ENCODE measurements at regions of chr6 and their contacts with region 1.

Region 1: DNA sequence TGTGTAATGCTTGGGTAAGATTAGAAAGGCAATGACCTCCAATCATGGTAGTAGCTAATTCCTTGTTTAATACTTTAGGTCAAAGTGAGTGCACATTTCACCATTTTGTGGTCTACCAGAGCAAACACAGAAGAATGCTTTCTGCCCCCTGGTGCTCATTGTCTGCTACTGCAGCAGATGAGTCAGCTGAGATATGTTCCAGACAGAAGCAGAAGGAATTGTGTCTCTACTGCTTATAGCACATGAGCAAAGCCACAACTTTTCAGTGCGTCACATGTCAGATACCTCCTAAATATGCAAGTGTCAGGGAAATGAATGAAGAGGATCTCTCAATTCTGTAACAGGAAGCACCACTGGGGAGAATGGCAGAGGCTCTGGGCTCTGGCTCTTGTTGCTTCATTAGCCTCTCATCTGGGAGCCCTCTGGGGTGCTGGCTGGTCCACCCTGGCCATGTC is 308.9 kb downstream of the ALDH8A1 start:
- DNase-seq: peak; percentile 80
- H3K4me3 ChIP-seq: no peak overlapping the region
- H3K27ac ChIP-seq: no peak overlapping the region
- H3K27me3 ChIP-seq: no peaks in the 10 kb centered on the region
- CTCF ChIP-seq: peak; percentile 92

Region 2: GRCh38 chr6:134178230-134179044 is 462.6 kb before region 1 on chr6:
- CTCF ChIA-PET with region 1: interaction called, 13 read pairs
- POLR2A ChIA-PET with region 1: interaction called, 9 read pairs
- DNase-seq: peak; percentile 86
- H3K4me3 ChIP-seq: peak overlapping the region; percentile 55
- H3K27ac ChIP-seq: peak overlapping the region; percentile 79
- H3K27me3 ChIP-seq: no peaks in the 10 kb centered on the region
- CTCF ChIP-seq: peak; percentile 97

Region 3: DNA sequence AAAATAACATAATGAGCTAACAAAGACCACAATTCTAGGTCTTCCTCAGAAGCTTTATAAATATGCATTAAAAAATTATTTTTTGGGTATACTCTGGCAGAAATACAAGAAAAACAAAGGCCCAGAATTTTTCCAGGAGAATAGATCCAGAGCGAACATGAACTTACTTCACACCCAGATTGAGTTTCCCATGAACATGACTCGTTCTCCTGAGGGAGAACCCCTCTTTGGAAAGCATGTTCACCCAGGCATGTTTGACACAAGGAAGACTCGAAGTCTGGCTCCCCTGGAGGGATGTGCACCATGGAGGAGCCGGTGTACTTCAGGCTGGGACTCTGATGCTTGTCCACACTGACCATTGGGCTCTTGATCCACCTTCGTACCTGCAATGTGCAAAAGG is 379.2 kb before region 1 on chr6:
- CTCF ChIA-PET with region 1: no interaction called
- POLR2A ChIA-PET with region 1: no interaction called
- DNase-seq: no peak
- H3K4me3 ChIP-seq: no peak overlapping the region
- H3K27ac ChIP-seq: no peak overlapping the region
- H3K27me3 ChIP-seq: no peaks in the 10 kb centered on the region
- CTCF ChIP-seq: no peak

Region 4: DNA sequence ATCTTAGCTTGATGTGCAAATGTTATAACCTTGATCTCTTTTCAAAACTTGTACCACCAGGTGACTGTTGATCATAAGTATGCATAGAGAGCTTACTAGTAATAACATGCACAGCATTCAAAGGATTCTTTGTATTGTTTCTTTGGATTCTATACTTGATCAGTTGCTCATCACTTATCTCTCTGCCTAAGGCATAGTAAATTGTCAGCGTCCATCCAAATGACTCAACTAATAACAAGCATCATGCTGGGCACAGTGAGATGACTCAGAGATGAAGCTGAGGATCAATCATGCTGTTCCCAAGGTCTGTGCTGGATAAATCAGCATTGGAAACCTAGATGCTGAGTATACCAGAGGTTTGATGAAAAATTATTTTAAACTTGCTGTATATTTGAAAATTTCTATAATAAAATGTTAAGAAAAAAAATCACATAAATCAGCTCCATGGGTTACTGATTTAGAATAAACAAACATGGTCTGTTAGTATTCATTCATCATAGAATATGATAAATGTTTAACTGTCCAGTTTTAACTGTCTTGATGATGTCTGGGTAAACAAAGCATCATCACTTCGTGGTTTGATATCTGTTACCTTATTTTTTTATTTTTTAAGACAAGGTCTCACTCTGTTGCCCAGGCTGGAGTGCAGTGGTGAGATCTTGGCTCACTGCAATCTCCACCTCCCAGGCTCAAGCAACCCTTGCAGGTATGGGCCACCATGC is 277.5 kb before region 1 on chr6:
- CTCF ChIA-PET with region 1: no interaction called
- POLR2A ChIA-PET with region 1: no interaction called
- DNase-seq: no peak
- H3K4me3 ChIP-seq: no peak overlapping the region
- H3K27ac ChIP-seq: no peak overlapping the region
- H3K27me3 ChIP-seq: no peaks in the 10 kb centered on the region
- CTCF ChIP-seq: no peak

Region 5: GRCh38 chr6:134429861-134430380 is 211.1 kb before region 1 on chr6:
- CTCF ChIA-PET with region 1: no interaction called
- POLR2A ChIA-PET with region 1: no interaction called
- DNase-seq: no peak
- H3K4me3 ChIP-seq: no peak overlapping the region
- H3K27ac ChIP-seq: no peak overlapping the region
- H3K27me3 ChIP-seq: no peaks in the 10 kb centered on the region
- CTCF ChIP-seq: no peak

Region 6: DNA sequence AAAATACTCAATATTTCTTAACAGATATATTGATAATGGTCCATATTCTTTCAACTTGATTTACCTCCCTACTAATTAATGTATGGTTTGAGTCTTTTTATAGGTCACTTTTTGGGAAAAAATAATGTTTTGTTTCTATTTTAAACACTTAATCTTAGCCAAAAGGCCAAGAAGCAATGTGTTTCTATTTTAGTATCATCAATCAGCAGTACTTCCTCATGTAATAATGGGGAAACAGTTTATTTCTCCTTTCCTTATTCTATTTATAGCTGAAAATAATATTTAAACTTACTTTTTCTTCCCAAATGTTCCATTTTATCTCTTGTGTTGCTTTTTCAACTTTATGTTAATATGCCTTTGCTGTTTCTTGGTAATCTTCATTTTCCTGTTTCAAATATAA is 13.7 kb after region 1 on chr6:
- CTCF ChIA-PET with region 1: interaction called, 11 read pairs
- POLR2A ChIA-PET with region 1: interaction called, 3 read pairs
- DNase-seq: no peak
- H3K4me3 ChIP-seq: no peak overlapping the region
- H3K27ac ChIP-seq: no peak overlapping the region
- H3K27me3 ChIP-seq: no peaks in the 10 kb centered on the region
- CTCF ChIP-seq: no peak

Region 7: GRCh38 chr6:134822920-134823709 is 182.1 kb after region 1 on chr6:
- CTCF ChIA-PET with region 1: interaction called, 18 read pairs
- POLR2A ChIA-PET with region 1: no interaction called
- DNase-seq: peak; percentile 66
- H3K4me3 ChIP-seq: no peak overlapping the region
- H3K27ac ChIP-seq: no peak overlapping the region
- H3K27me3 ChIP-seq: no peaks in the 10 kb centered on the region
- CTCF ChIP-seq: peak; percentile 95

Region 8: GRCh38 chr6:134903448-134903847 is 262.4 kb after region 1 on chr6:
- CTCF ChIA-PET with region 1: interaction called, 10 read pairs
- POLR2A ChIA-PET with region 1: no interaction called
- DNase-seq: no peak
- H3K4me3 ChIP-seq: no peak overlapping the region
- H3K27ac ChIP-seq: no peak overlapping the region
- H3K27me3 ChIP-seq: no peaks in the 10 kb centered on the region
- CTCF ChIP-seq: no peak

Measured in AG04450 (cell line).